ENCODE measurements at regions of chr1 and their contacts with region 1.

Region 1: DNA sequence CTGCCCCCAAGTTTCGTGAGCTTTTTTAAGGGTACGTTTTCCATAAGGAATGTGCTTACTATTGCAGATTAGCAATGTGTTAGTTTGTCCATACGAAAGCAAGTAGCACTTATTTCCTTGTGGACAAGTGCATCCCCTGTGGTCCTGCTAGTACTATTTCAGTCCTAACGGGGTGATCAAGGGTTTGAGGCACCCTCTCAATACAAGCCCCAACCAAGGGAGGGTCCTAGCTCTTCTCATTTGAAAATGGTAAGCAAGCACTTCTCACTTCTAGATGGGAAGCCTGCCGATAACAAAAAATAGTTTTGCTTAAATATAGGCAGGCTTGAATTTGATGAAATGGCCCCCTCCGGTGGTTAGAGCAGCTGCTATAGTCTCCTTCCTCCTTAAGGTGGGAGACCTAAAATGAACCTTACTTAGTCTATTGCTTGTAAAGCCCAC is 64.0 kb upstream of the HMCN1 start:
- DNase-seq: no peak
- H3K4me3 ChIP-seq: no peak overlapping the region
- H3K27ac ChIP-seq: no peak overlapping the region
- H3K4me1 ChIP-seq: peaks cover 0 to 6% (median 0%) of the 10 kb centered on the region in 4 donors
- H3K27me3 ChIP-seq: no peaks in the 10 kb centered on the region
- CTCF ChIP-seq: peak in 1 of 4 experiments; percentile 37
- EP300 ChIP-seq: no peak
- POLR2A ChIP-seq: no peak

Region 2: GRCh38 chr1:185317034-185317885 is 352.9 kb before region 1 on chr1 and contains the start of gene IVNS1ABP:
- intact Hi-C with region 1: loop called (anchors 10 kb)
- DNase-seq: peak; percentile 97
- H3K4me3 ChIP-seq: peak within 1 kb of the TSS; percentile 82 to 91 (median 86)
- H3K27ac ChIP-seq: peak within 1 kb of the TSS; percentile 95 to 98 (median 96)
- H3K4me1 ChIP-seq: peaks cover 0 to 43% (median 35%) of the 10 kb centered on the region in 4 donors
- H3K27me3 ChIP-seq: no peaks in the 10 kb centered on the region
- CTCF ChIP-seq: no peak
- EP300 ChIP-seq: no peak
- POLR2A ChIP-seq: peak; percentile 93 to 95
- total RNA-seq, gene IVNS1ABP: 29.8 to 36.0 (median 31.2) TPM